ENCODE measurements at regions of chr19 and their contacts with region 1.

Region 1: GRCh38 chr19:40827386-40828247 is 22.6 kb downstream of the CYP2A6 start:
- DNase-seq: no peak
- ATAC-seq: no peak
- H3K4me3 ChIP-seq: no peak overlapping the region
- H3K4me3 Mint-ChIP-seq: peak overlapping the region; percentile 58
- H3K27ac ChIP-seq: peak overlapping the region; percentile 57 to 63
- H3K27ac Mint-ChIP-seq: peak overlapping the region; percentile 94
- H3K4me1 ChIP-seq: peaks cover 26% of the 10 kb centered on the region
- H3K4me1 Mint-ChIP-seq: peaks cover 28% of the 10 kb centered on the region
- H3K27me3 ChIP-seq: no peaks in the 10 kb centered on the region
- H3K27me3 Mint-ChIP-seq: no peaks in the 10 kb centered on the region
- CTCF ChIP-seq: no peak

Region 2: GRCh38 chr19:40872209-40872608 is 44.6 kb after region 1 on chr19:
- CTCF ChIA-PET with region 1: no interaction called
- POLR2A ChIA-PET with region 1: no interaction called
- intact Hi-C with region 1: loop called in 1 of 2 experiments (anchors 5 kb)
- DNase-seq: no peak
- ATAC-seq: no peak
- H3K4me3 ChIP-seq: no peak overlapping the region
- H3K4me3 Mint-ChIP-seq: no peak overlapping the region
- H3K27ac ChIP-seq: no peak overlapping the region
- H3K27ac Mint-ChIP-seq: no peak overlapping the region
- H3K4me1 ChIP-seq: peaks cover 11% of the 10 kb centered on the region
- H3K4me1 Mint-ChIP-seq: peaks cover 14% of the 10 kb centered on the region
- H3K27me3 ChIP-seq: no peaks in the 10 kb centered on the region
- H3K27me3 Mint-ChIP-seq: peaks cover 8% of the 10 kb centered on the region
- CTCF ChIP-seq: no peak

Region 3: GRCh38 chr19:41123716-41124294 is 296.2 kb after region 1 on chr19:
- CTCF ChIA-PET with region 1: no interaction called
- POLR2A ChIA-PET with region 1: no interaction called
- intact Hi-C with region 1: loop called in 1 of 2 experiments (anchors 5 kb)
- DNase-seq: peak in 1 of 9 experiments; percentile 20
- ATAC-seq: no peak
- H3K4me3 ChIP-seq: no peak overlapping the region
- H3K4me3 Mint-ChIP-seq: no peak overlapping the region
- H3K27ac ChIP-seq: no peak overlapping the region
- H3K27ac Mint-ChIP-seq: peak overlapping the region; percentile 41
- H3K4me1 ChIP-seq: peaks cover 23% of the 10 kb centered on the region
- H3K4me1 Mint-ChIP-seq: peaks cover 44% of the 10 kb centered on the region
- H3K27me3 ChIP-seq: no peaks in the 10 kb centered on the region
- H3K27me3 Mint-ChIP-seq: no peaks in the 10 kb centered on the region
- CTCF ChIP-seq: no peak

Measured in CD8-positive, alpha-beta T cell (primary cell).